Activated CD8-positive, alpha-beta T cell treated with anti-CD3 and anti-CD28 coated beads for 36 hours (primary cell): ENCODE measurements at regions of chr7 and their contacts with region 1.

Region 1: DNA sequence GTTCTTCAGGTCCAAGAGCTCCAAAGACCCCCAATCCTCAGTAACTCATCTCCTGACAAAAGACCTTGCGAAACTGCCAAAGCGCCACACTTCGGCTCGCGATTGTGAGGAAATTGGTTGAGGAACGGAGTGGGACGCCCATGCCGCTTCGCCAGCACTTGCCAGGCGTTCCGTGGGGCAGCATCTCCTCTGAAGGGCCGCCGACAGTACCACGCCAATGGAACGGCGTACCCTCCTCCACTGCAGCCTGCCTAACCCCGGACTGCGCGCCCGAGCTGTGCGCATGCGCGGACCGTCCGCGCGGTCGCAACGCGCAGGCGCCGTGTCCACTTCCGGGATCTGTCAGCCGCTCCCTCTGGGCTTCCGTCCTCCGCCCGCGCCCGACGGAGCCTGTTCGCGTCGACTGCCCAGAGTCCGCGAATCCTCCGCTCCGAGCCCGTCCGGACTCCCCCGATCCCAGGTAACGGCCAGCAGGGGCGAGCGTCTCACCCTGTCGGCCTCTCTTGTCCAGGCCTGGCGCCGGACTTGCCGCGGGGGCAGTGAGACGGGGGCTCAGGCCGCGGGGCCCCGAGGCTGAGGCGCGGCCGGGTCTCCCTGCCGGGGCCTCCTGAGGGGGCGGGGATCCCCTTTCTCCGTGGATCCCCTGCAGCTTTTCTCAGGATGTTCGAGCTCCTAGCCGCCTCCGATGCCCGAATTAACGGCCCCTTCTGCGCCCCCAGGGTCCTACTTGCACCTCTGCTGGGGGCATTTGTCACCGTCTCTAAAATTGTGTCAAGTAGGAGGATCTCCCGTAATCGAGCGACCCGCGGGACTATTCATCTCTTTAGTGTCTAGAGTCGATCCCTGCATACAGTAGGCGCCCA is at the start of gene ARPC1A:
- DNase-seq: peak; percentile 91
- ATAC-seq: peak; percentile 83
- H3K4me3 Mint-ChIP-seq: peak within 1 kb of the TSS; percentile 99
- H3K27ac Mint-ChIP-seq: peak within 1 kb of the TSS; percentile 90
- H3K4me1 Mint-ChIP-seq: peaks cover 36% of the 10 kb centered on the region
- H3K27me3 Mint-ChIP-seq: no peaks in the 10 kb centered on the region
- CTCF ChIP-seq: no peak
- total RNA-seq, gene ARPC1A: 45.4 to 45.8 TPM

Region 2: GRCh38 chr7:99374103-99375064 is 48.6 kb after region 1 on chr7 and contains the start of gene ARPC1B:
- CTCF ChIA-PET with region 1: no interaction called
- POLR2A ChIA-PET with region 1: interaction called, 21 read pairs
- intact Hi-C with region 1: no loop called
- DNase-seq: peak; percentile 92
- ATAC-seq: peak; percentile 67
- H3K4me3 Mint-ChIP-seq: peak within 1 kb of the TSS; percentile 77
- H3K27ac Mint-ChIP-seq: peak within 1 kb of the TSS; percentile 83
- H3K4me1 Mint-ChIP-seq: peaks cover 37% of the 10 kb centered on the region
- H3K27me3 Mint-ChIP-seq: no peaks in the 10 kb centered on the region
- CTCF ChIP-seq: no peak
- total RNA-seq, gene ARPC1B: 304 to 307 TPM